ENCODE measurements at regions of chr3 and their contacts with region 1.

Region 1: GRCh38 chr3:142279965-142280590 is 54.7 kb upstream of the GK5 start:
- H3K4me3 Mint-ChIP-seq: no peak overlapping the region
- H3K27ac Mint-ChIP-seq: no peak overlapping the region
- H3K4me1 Mint-ChIP-seq: peaks cover 33% of the 10 kb centered on the region
- H3K27me3 Mint-ChIP-seq: no peaks in the 10 kb centered on the region

Region 2: GRCh38 chr3:141959921-141960554 is 320.0 kb before region 1 on chr3:
- intact Hi-C with region 1: loop called (anchors 1 kb)
- H3K4me3 Mint-ChIP-seq: no peak overlapping the region
- H3K27ac Mint-ChIP-seq: no peak overlapping the region
- H3K4me1 Mint-ChIP-seq: no peaks in the 10 kb centered on the region
- H3K27me3 Mint-ChIP-seq: no peaks in the 10 kb centered on the region

Region 3: GRCh38 chr3:142129516-142130171 is 150.4 kb before region 1 on chr3:
- intact Hi-C with region 1: loop called (anchors 1 kb)
- H3K4me3 Mint-ChIP-seq: no peak overlapping the region
- H3K27ac Mint-ChIP-seq: no peak overlapping the region
- H3K4me1 Mint-ChIP-seq: peaks cover 11% of the 10 kb centered on the region
- H3K27me3 Mint-ChIP-seq: no peaks in the 10 kb centered on the region

Region 4: DNA sequence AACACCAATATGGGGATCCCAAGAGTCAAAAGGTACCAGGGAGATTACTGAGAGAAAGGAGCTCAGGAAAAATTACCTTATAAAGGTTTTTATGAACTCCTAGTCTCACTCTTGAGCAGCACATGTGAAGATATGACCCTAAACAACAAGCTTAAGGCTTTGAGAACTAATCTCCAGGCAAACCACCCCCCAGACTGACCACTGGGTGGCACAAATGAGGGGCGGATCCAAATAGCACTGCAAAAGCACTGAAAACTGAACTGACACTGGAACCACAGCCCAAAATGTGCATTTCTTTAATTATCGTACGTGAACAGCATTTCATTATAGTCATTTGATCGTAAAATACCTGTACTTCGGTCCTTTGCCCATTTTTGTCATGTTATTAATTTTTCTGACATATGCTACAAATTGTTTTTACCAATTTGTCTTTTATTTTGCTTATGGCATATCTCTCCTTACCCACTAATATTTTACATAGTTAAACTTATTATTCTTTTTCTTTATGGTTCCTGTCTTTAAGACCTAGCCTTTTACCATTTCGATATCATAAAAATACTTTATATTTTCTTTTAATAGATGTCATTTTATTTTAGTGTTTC is 99.2 kb before region 1 on chr3:
- intact Hi-C with region 1: loop called (anchors 2 kb)
- H3K4me3 Mint-ChIP-seq: no peak overlapping the region
- H3K27ac Mint-ChIP-seq: no peak overlapping the region
- H3K4me1 Mint-ChIP-seq: no peaks in the 10 kb centered on the region
- H3K27me3 Mint-ChIP-seq: no peaks in the 10 kb centered on the region

Measured in dendritic cell treated with granulocyte-macrophage colony-stimulating factor and Interleukin-4, amounts not matched to agents 40 ng/mL and 50 ng/mL, for 4 days (primary cell).